ENCODE measurements at regions of chr7 and their contacts with region 1.

Region 1: DNA sequence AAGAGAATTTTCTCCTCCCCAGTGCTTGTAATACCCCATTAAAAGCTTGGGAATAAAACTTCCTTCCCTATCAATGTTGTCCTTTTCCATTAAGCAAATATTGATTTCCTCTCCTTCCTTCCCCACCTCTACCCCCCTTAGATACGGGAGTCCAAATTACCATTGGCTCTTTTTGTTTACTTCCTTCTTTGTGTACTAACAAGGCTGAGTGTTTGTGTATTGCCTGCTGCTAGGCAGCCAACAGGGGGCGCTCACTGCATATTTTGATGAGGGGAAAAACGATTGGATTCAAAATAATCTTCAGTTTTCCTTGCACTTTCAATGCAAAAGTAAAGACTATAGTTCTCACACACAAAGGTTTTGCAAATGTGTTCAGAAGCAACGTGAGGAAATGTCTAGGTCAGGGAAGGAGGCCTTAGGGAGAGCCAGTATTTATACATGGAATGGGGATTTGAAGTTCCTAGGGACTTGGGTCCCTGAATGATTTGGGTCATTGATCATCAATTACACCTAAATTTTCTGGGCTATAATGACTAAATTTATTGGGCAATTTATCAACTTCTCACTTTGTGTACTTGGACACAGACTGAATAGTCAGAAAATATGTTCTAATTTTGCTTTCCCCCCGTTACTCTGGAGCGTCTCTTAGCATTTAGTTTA is 23.6 kb upstream of the VPS41 start:
- DNase-seq: no peak
- H3K4me3 ChIP-seq: no peak overlapping the region
- CTCF ChIP-seq: peak; percentile 74

Region 2: GRCh38 chr7:38846265-38846664 is 86.4 kb before region 1 on chr7:
- CTCF ChIA-PET with region 1: no interaction called
- POLR2A ChIA-PET with region 1: no interaction called
- DNase-seq: no peak
- H3K4me3 ChIP-seq: no peak overlapping the region
- CTCF ChIP-seq: no peak

Region 3: DNA sequence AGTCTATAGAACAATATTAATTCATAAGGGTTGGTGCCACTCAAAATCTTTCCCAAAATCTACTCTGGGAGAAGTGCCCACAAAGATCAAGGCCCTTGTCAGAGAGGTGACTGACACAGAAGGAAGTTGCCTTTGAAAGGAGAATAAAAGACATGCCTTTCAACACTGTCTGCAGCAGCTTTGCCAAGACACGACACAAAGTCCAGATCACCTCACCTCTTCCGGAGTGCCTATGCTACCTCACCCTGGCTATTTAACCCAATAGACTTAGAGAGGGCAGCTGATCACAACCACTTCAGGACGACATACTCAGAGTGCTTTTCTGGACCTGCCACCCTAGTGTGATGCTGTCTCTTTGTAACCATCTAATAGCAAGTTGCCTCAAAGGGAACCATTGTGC is 584.6 kb after region 1 on chr7:
- CTCF ChIA-PET with region 1: interaction called, 28 read pairs
- POLR2A ChIA-PET with region 1: no interaction called
- DNase-seq: no peak
- H3K4me3 ChIP-seq: no peak overlapping the region
- CTCF ChIP-seq: no peak

Region 4: DNA sequence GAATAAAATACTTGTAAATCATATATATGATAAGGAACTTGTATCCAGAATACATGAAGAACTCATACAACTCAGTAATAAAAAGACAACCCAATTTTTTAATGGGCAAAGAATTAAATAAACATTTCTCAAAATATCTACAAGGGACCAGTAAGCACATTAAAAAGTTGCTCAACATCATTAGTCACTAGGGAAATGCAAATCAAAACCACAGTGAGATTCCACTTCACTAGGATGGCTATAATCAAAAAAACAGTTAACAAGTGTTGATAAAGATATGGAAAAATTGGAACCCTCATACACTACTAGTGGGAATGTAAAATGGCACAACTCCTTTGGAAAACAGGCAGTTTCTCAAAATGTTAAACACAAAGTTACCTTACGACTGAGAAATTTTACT is 593.3 kb after region 1 on chr7:
- CTCF ChIA-PET with region 1: interaction called, 16 read pairs
- POLR2A ChIA-PET with region 1: no interaction called
- DNase-seq: no peak
- H3K4me3 ChIP-seq: no peak overlapping the region
- CTCF ChIP-seq: no peak